Caco-2 (cell line): ENCODE measurements at regions of chr10 and their contacts with region 1.

Region 1: DNA sequence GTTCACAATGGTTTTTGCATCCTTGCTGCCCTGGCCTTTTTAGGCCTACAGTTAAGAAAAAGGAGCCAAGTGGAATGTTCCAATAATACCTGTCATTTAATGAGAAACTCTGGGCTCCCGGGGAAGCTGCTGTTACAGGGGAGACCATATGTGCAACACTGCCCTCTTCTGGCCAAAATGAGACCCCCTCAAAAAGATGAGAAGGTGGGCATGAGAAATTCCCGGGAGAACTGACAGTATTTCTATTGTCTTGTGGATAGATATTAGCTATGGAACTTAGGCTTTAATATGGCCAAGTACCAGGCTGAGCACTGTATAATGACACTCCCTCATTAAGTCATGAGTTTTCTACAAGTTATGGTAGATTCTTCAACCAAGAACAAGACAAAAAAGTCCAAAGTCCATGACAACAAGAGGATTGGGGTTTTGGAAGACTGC is 99.4 kb downstream of the CCDC3 start:
- DNase-seq: peak; percentile 65 to 77
- H3K4me3 ChIP-seq: no peak overlapping the region
- H3K4me3 Mint-ChIP-seq: no peak overlapping the region
- H3K27ac Mint-ChIP-seq: no peak overlapping the region
- H3K4me1 ChIP-seq: no peaks in the 10 kb centered on the region
- H3K4me1 Mint-ChIP-seq: no peaks in the 10 kb centered on the region
- H3K27me3 ChIP-seq: no peaks in the 10 kb centered on the region
- H3K27me3 Mint-ChIP-seq: peaks cover 4% of the 10 kb centered on the region
- CTCF ChIP-seq: peak; percentile 82 to 91

Region 2: DNA sequence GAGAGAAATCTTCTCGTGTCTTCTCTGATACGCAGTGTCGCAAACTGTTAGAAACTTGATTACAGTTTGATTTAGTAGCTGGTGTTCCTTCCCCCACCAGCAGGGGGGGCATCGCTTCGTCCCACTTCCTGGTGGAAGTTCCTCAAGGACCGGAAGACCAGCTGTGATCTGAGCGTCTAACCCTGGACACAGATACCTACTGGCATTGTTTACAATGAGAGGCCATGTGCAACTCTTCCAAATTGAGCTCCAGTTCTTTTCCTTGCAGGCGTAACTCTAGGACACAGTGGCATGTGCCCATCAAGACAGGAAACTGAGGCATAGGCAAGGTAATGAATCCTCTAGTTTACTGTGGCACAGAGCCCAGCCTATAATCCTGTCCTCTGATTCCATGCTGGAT is 119.6 kb before region 1 on chr10:
- CTCF ChIA-PET with region 1: interaction called, 23 read pairs
- POLR2A ChIA-PET with region 1: no interaction called
- intact Hi-C with region 1: loop called (anchors 2 kb)
- DNase-seq: peak; percentile 70 to 79
- H3K4me3 ChIP-seq: no peak overlapping the region
- H3K4me3 Mint-ChIP-seq: no peak overlapping the region
- H3K27ac Mint-ChIP-seq: no peak overlapping the region
- H3K4me1 ChIP-seq: no peaks in the 10 kb centered on the region
- H3K4me1 Mint-ChIP-seq: peaks cover 6% of the 10 kb centered on the region
- H3K27me3 ChIP-seq: no peaks in the 10 kb centered on the region
- H3K27me3 Mint-ChIP-seq: no peaks in the 10 kb centered on the region
- CTCF ChIP-seq: peak; percentile 86 to 95

Region 3: GRCh38 chr10:12934777-12935176 is 32.6 kb after region 1 on chr10:
- CTCF ChIA-PET with region 1: no interaction called
- POLR2A ChIA-PET with region 1: no interaction called
- intact Hi-C with region 1: no loop called
- DNase-seq: no peak
- H3K4me3 ChIP-seq: no peak overlapping the region
- H3K4me3 Mint-ChIP-seq: no peak overlapping the region
- H3K27ac Mint-ChIP-seq: no peak overlapping the region
- H3K4me1 ChIP-seq: no peaks in the 10 kb centered on the region
- H3K4me1 Mint-ChIP-seq: no peaks in the 10 kb centered on the region
- H3K27me3 ChIP-seq: 0 out of 2 replicates have a peak, but pooled peaks cover 2% of the 10 kb centered on the region
- H3K27me3 Mint-ChIP-seq: peaks cover 15% of the 10 kb centered on the region
- CTCF ChIP-seq: no peak

Region 4: GRCh38 chr10:13056456-13057077 is 154.4 kb after region 1 on chr10:
- CTCF ChIA-PET with region 1: no interaction called
- POLR2A ChIA-PET with region 1: no interaction called
- intact Hi-C with region 1: loop called (anchors 1 kb)
- DNase-seq: peak in 1 of 2 experiments; percentile 62
- H3K4me3 ChIP-seq: no peak overlapping the region
- H3K4me3 Mint-ChIP-seq: no peak overlapping the region
- H3K27ac Mint-ChIP-seq: no peak overlapping the region
- H3K4me1 ChIP-seq: no peaks in the 10 kb centered on the region
- H3K4me1 Mint-ChIP-seq: no peaks in the 10 kb centered on the region
- H3K27me3 ChIP-seq: no peaks in the 10 kb centered on the region
- H3K27me3 Mint-ChIP-seq: no peaks in the 10 kb centered on the region
- CTCF ChIP-seq: peak; percentile 64 to 88

Region 5: GRCh38 chr10:13074561-13075451 is 172.7 kb after region 1 on chr10:
- CTCF ChIA-PET with region 1: interaction called, 6 read pairs
- POLR2A ChIA-PET with region 1: no interaction called
- intact Hi-C with region 1: loop called (anchors 1 kb)
- DNase-seq: peak; percentile 74 to 87
- H3K4me3 ChIP-seq: no peak overlapping the region
- H3K4me3 Mint-ChIP-seq: no peak overlapping the region
- H3K27ac Mint-ChIP-seq: no peak overlapping the region
- H3K4me1 ChIP-seq: no peaks in the 10 kb centered on the region
- H3K4me1 Mint-ChIP-seq: no peaks in the 10 kb centered on the region
- H3K27me3 ChIP-seq: no peaks in the 10 kb centered on the region
- H3K27me3 Mint-ChIP-seq: peaks cover 2% of the 10 kb centered on the region
- CTCF ChIP-seq: peak; percentile 95 to 97

Region 6: DNA sequence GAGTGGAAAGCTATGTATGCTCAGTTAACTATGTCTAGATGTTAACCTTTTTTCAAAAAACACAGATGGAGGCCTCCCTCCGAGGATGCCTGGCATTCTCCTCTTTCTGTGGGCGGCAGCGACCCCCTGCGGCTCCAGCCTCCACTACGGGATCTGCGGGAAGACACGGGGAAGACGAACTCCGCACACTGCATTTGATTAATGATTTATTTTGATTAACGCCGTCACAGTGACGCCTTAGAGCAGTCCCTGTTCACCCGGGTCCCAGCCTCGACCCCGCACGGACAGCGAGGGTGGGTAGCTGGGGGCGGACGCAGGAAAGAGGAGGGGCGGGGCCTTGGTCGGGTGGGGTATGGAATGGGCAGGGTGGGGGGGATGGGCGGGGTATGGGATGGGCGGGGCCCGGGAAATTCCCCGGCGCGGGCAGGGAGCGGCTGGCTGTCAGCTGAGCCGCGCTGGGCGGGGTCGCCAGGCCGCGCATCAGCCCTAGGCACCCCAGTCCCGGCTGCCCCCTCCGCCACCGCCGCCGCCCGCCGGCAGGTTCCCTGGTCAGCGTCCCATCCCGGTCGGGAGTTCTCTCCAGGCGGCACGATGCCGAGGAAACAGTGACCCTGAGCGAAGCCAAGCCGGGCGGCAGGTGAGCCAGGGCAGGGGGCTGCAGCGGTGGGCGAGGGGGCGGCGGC is 197.7 kb after region 1 on chr10 and contains the start of gene OPTN:
- CTCF ChIA-PET with region 1: interaction called, 5 read pairs
- POLR2A ChIA-PET with region 1: no interaction called
- intact Hi-C with region 1: loop called (anchors 1 kb)
- DNase-seq: peak; percentile 88 to 93
- H3K4me3 ChIP-seq: peak within 1 kb of the TSS; percentile 93
- H3K4me3 Mint-ChIP-seq: peak within 1 kb of the TSS; percentile 74
- H3K27ac Mint-ChIP-seq: peak within 1 kb of the TSS; percentile 48
- H3K4me1 ChIP-seq: peaks cover 11% of the 10 kb centered on the region; the same call in 1 of the 2 replicates
- H3K4me1 Mint-ChIP-seq: peaks cover 22% of the 10 kb centered on the region
- H3K27me3 ChIP-seq: no peaks in the 10 kb centered on the region
- H3K27me3 Mint-ChIP-seq: no peaks in the 10 kb centered on the region
- CTCF ChIP-seq: peak; percentile 87 to 96
- total RNA-seq, gene OPTN: 59.6 and 70.9 TPM in 2 replicates